Breast epithelium (tissue), 4 donors: ENCODE measurements at regions of chr9 and their contacts with region 1.

Region 1: GRCh38 chr9:96193236-96193755 is 108.7 kb downstream of the HSD17B3 start:
- DNase-seq: no peak
- H3K4me3 ChIP-seq: no peak overlapping the region
- H3K27ac ChIP-seq: no peak overlapping the region
- H3K4me1 ChIP-seq: no peaks in the 10 kb centered on the region
- H3K27me3 ChIP-seq: no peaks in the 10 kb centered on the region
- CTCF ChIP-seq: no peak
- POLR2A ChIP-seq: no peak

Region 2: DNA sequence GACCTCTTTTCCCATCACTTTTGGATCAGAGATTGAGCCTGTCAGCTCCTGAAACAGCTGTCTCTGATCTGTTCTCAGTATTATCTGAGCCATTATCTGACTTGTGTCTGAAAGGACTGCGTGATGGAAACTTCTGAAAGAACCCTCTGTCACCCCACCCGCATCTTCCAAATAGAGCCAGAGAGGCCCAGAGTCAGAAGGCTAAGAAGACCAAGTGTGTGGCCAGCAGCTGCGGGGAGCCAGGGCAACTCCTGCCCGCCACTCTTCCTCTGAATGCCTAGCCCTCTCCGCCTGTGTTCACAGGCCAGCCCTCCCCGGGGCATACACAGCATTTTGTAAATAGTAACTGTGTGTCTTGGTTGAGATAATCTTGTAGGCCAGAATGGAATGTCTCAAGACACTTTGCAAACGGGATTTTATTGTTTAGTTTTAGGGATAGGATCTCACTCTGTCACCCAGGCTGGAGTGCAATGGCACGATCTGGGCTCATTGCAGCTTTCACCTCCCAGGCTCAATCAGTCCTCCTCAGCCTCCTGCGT is 1374.1 kb before region 1 on chr9:
- intact Hi-C with region 1: loop called (anchors 5 kb)
- DNase-seq: peak in 1 of 2 donors; percentile 69
- H3K4me3 ChIP-seq: no peak overlapping the region
- H3K27ac ChIP-seq: peak overlapping the region in 1 of 2 donors; percentile 33
- H3K4me1 ChIP-seq: peaks cover 0 to 3% of the 10 kb centered on the region in 2 donors
- H3K27me3 ChIP-seq: no peaks in the 10 kb centered on the region
- CTCF ChIP-seq: no peak
- POLR2A ChIP-seq: no peak